Transverse colon (tissue), 4 donors: ENCODE measurements at regions of chr11 and their contacts with region 1.

Region 1: GRCh38 chr11:132278801-132279574 is 908.6 kb downstream of the NTM start:
- DNase-seq: no peak
- H3K4me3 ChIP-seq: no peak overlapping the region
- H3K27ac ChIP-seq: no peak overlapping the region
- H3K4me1 ChIP-seq: no peaks in the 10 kb centered on the region
- H3K27me3 ChIP-seq: no peaks in the 10 kb centered on the region
- CTCF ChIP-seq: peak in 1 of 5 experiments; percentile 7
- EP300 ChIP-seq: no peak
- POLR2A ChIP-seq: no peak

Region 2: DNA sequence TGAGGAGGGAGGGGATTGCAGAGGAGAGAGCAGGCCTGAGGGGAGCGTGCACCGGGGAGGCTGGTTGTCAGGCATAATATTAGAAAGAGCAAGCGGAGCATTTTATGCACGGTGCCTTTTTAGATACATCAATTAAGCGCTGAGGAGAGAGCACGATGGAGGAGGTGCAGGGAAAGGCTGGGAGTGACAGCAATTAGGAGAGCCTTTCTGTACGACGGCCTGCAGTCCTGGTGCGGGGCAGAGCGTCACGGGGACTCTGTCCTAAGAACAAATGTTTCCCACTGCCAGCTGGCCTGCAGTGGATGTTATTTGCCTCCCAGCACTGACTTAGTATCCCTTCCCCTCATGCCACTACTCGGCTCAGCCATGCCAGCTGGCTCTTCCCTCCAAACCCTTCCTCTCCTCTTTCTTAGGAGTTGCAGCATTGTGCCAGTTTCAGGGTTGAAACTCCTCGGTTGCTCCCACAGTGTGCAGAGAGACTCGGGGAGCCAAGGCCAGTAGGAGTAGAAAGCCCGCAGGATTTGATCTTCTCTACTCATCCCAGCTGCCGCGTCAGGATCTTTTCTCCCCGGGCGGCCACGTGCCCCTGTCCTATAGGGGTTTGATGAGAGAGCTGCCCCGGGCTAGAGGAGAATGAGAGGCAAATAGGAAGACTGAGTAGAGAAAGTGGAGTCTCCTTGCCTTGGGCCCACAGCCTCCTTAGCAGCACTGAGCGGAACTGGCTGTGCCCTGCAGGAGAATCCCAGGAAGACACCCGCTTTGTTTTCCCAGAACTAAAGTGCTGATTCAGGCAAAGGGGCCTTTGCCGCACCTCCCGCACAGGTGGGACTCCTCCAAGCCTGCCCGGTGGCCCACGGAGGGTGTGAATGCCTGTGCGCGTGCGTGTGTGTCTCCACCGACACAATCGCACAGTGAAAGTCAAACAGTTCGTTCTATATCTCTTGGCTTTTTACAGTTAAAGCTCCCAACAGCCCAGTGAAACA is 33.3 kb before region 1 on chr11:
- in situ Hi-C with region 1: no loop called
- intact Hi-C with region 1: no loop called
- DNase-seq: no peak
- H3K4me3 ChIP-seq: no peak overlapping the region
- H3K27ac ChIP-seq: no peak overlapping the region
- H3K4me1 ChIP-seq: no peaks in the 10 kb centered on the region
- H3K27me3 ChIP-seq: no peaks in the 10 kb centered on the region
- CTCF ChIP-seq: no peak
- EP300 ChIP-seq: no peak
- POLR2A ChIP-seq: no peak

Region 3: GRCh38 chr11:132379540-132379939 is 100.6 kb after region 1 on chr11:
- in situ Hi-C with region 1: loop called in 1 of 4 experiments (anchors 25 kb)
- intact Hi-C with region 1: no loop called
- DNase-seq: no peak
- H3K4me3 ChIP-seq: no peak overlapping the region
- H3K27ac ChIP-seq: no peak overlapping the region
- H3K4me1 ChIP-seq: no peaks in the 10 kb centered on the region
- H3K27me3 ChIP-seq: no peaks in the 10 kb centered on the region
- CTCF ChIP-seq: no peak
- EP300 ChIP-seq: no peak
- POLR2A ChIP-seq: no peak

Region 4: GRCh38 chr11:132439711-132440255 is 160.8 kb after region 1 on chr11:
- in situ Hi-C with region 1: no loop called
- intact Hi-C with region 1: no loop called
- DNase-seq: no peak
- H3K4me3 ChIP-seq: no peak overlapping the region
- H3K27ac ChIP-seq: no peak overlapping the region
- H3K4me1 ChIP-seq: no peaks in the 10 kb centered on the region
- H3K27me3 ChIP-seq: no peaks in the 10 kb centered on the region
- CTCF ChIP-seq: no peak
- EP300 ChIP-seq: no peak
- POLR2A ChIP-seq: no peak